Body of pancreas (tissue), 4 donors: ENCODE measurements at regions of chr21 and their contacts with region 1.

Region 1: DNA sequence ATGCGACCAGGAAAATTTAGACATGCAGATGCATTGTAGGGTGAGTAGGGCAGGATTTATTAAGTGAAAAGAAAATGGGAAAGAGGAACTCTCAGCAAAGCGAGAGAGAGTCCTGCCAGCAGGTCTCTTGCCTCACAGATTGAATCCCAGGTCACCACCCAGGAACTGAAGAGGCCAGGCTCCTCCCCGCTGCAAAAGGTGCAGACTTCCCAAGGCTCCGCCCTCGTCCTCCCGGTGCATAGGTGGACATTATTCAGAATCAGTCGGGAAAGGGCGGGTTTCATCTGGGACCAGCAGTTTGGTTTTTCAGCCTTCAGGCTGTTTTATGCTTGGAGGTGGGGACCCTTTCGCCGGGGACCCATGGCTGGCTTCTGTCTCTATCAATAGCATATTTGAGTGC is 41.6 kb upstream of the APP start:
- DNase-seq: peak in 1 of 4 donors; percentile 10
- ATAC-seq: no peak
- H3K4me3 ChIP-seq: no peak overlapping the region
- H3K27ac ChIP-seq: no peak overlapping the region
- H3K4me1 ChIP-seq: no peaks in the 10 kb centered on the region
- H3K27me3 ChIP-seq: no peaks in the 10 kb centered on the region
- CTCF ChIP-seq: no peak
- POLR2A ChIP-seq: no peak

Region 2: GRCh38 chr21:25831300-25831960 is 380.8 kb before region 1 on chr21:
- intact Hi-C with region 1: no loop called
- DNase-seq: no peak
- ATAC-seq: no peak
- H3K4me3 ChIP-seq: no peak overlapping the region
- H3K27ac ChIP-seq: no peak overlapping the region
- H3K4me1 ChIP-seq: no peaks in the 10 kb centered on the region
- H3K27me3 ChIP-seq: no peaks in the 10 kb centered on the region
- CTCF ChIP-seq: no peak
- POLR2A ChIP-seq: no peak

Region 3: GRCh38 chr21:26153758-26154157 is 58.5 kb before region 1 on chr21:
- intact Hi-C with region 1: loop called (anchors 10 kb)
- DNase-seq: no peak
- ATAC-seq: no peak
- H3K4me3 ChIP-seq: no peak overlapping the region
- H3K27ac ChIP-seq: no peak overlapping the region
- H3K4me1 ChIP-seq: peaks cover 28% of the 10 kb centered on the region
- H3K27me3 ChIP-seq: no peaks in the 10 kb centered on the region
- CTCF ChIP-seq: no peak
- POLR2A ChIP-seq: no peak